CD14-positive monocyte (primary cell): ENCODE measurements at regions of chr2 and their contacts with region 1.

Region 1: GRCh38 chr2:20424300-20425290 is 22.3 kb upstream of the RHOB start:
- DNase-seq: peak; percentile 70 to 81 (median 79)
- H3K4me3 ChIP-seq: peak overlapping the region; percentile 1 to 67 (median 38)
- H3K4me3 Mint-ChIP-seq: peak overlapping the region; percentile 75 to 85
- H3K27ac ChIP-seq: peak overlapping the region; percentile 97 to 98
- H3K27ac Mint-ChIP-seq: peak overlapping the region; percentile 95 to 99 (median 98)
- H3K4me1 ChIP-seq: peaks cover 69 to 82% of the 10 kb centered on the region in 2 donors
- H3K4me1 Mint-ChIP-seq: peaks cover 77% of the 10 kb centered on the region
- H3K27me3 ChIP-seq: no peaks in the 10 kb centered on the region
- H3K27me3 Mint-ChIP-seq: peaks cover 0 to 2% (median 1%) of the 10 kb centered on the region in 3 donors
- CTCF ChIP-seq: no peak

Region 2: GRCh38 chr2:20438334-20439192 is 14.0 kb after region 1 on chr2:
- intact Hi-C with region 1: loop called in 1 of 2 experiments (anchors 2 kb)
- DNase-seq: peak; percentile 81 to 89 (median 88)
- H3K4me3 ChIP-seq: peak overlapping the region in 1 of 3 experiments; percentile 65
- H3K4me3 Mint-ChIP-seq: peak overlapping the region; percentile 32 to 79
- H3K27ac ChIP-seq: peak overlapping the region; percentile 86 to 99
- H3K27ac Mint-ChIP-seq: peak overlapping the region; percentile 98 to 100 (median 99)
- H3K4me1 ChIP-seq: peaks cover 37 to 46% of the 10 kb centered on the region in 2 donors
- H3K4me1 Mint-ChIP-seq: peaks cover 43% of the 10 kb centered on the region
- H3K27me3 ChIP-seq: no peaks in the 10 kb centered on the region
- H3K27me3 Mint-ChIP-seq: peaks cover 0 to 4% (median 2%) of the 10 kb centered on the region in 3 donors
- CTCF ChIP-seq: no peak